Activated CD4-positive, alpha-beta T cell treated with anti-CD3 and anti-CD28 coated beads, Interleukin-2, amount 10 ng/mL, durations not matched to agents 24 days and 14 days (primary cell): ENCODE measurements at regions of chr2 and their contacts with region 1.

Region 1: GRCh38 chr2:216081487-216082116 is at the starts of genes PECR and TMEM169:
- DNase-seq: peak; percentile 93
- H3K4me3 Mint-ChIP-seq: peak within 1 kb of the TSS; percentile 90
- H3K27ac Mint-ChIP-seq: peak within 1 kb of the TSS; percentile 78
- H3K4me1 Mint-ChIP-seq: peaks cover 52% of the 10 kb centered on the region
- H3K27me3 Mint-ChIP-seq: no peaks in the 10 kb centered on the region
- total RNA-seq, gene PECR: 13.1 and 15.3 TPM in 2 replicates
- total RNA-seq, gene TMEM169: 0.51 and 0.97 TPM in 2 replicates

Region 2: GRCh38 chr2:215870986-215871385 is 210.6 kb before region 1 on chr2:
- intact Hi-C with region 1: no loop called
- DNase-seq: no peak
- H3K4me3 Mint-ChIP-seq: no peak overlapping the region
- H3K27ac Mint-ChIP-seq: no peak overlapping the region
- H3K4me1 Mint-ChIP-seq: no peaks in the 10 kb centered on the region
- H3K27me3 Mint-ChIP-seq: peaks cover 6% of the 10 kb centered on the region

Region 3: GRCh38 chr2:216034065-216034464 is 47.5 kb before region 1 on chr2:
- intact Hi-C with region 1: loop called (anchors 1 kb)
- DNase-seq: peak; percentile 94
- H3K4me3 Mint-ChIP-seq: no peak overlapping the region
- H3K27ac Mint-ChIP-seq: no peak overlapping the region
- H3K4me1 Mint-ChIP-seq: peaks cover 36% of the 10 kb centered on the region
- H3K27me3 Mint-ChIP-seq: no peaks in the 10 kb centered on the region

Region 4: GRCh38 chr2:216044883-216045486 is 36.6 kb before region 1 on chr2:
- intact Hi-C with region 1: no loop called
- DNase-seq: no peak
- H3K4me3 Mint-ChIP-seq: no peak overlapping the region
- H3K27ac Mint-ChIP-seq: no peak overlapping the region
- H3K4me1 Mint-ChIP-seq: peaks cover 6% of the 10 kb centered on the region
- H3K27me3 Mint-ChIP-seq: no peaks in the 10 kb centered on the region

Region 5: GRCh38 chr2:216064011-216064630 is 17.5 kb before region 1 on chr2:
- intact Hi-C with region 1: loop called (anchors 1 kb)
- DNase-seq: no peak
- H3K4me3 Mint-ChIP-seq: no peak overlapping the region
- H3K27ac Mint-ChIP-seq: peak overlapping the region; percentile 11
- H3K4me1 Mint-ChIP-seq: peaks cover 8% of the 10 kb centered on the region
- H3K27me3 Mint-ChIP-seq: no peaks in the 10 kb centered on the region

Region 6: DNA sequence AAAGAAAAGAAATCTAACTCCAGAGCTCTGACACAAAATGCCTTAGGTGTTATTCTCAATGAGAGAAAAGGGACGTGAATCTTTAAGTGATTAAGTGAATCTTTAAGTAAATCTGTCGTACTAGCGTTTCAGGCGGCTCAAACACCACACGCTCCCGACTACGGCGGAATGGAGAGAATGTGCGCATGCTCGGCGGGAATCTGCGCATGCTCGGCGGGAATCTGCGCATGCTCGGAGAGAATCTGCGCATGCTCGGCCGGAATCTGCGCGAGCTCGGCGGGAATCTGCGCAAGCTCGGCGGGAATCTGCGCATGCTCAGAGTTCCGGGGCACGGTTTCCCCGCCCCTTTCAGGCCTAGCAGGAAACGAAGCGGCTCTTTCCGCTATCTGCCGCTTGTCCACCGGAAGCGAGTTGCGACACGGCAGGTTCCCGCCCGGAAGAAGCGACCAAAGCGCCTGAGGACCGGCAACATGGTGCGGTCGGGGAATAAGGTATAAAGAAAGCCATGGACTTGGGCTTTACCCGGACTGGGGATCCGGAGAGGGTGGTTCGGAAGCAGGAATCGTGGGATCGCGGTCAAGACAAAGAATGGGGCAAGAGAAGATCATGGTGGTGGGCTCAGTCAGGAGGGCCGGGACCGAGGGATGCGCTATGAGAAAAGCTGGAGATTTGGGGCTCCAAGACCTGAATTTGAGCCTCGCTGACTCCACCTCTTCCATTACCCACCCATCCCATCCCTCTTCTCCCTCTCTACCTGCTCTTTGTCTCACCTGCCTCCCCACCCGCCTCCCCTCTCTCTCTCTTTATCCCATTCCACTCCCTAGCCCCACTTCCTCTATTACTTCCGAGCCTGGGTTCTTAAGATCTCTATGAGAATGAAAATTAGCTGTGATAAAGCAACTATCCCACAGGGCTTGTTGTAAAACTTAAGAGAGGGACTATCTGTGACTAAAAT is 27.6 kb after region 1 on chr2 and contains the start of gene XRCC5:
- intact Hi-C with region 1: loop called (anchors 1 kb)
- DNase-seq: peak; percentile 99
- H3K4me3 Mint-ChIP-seq: peak within 1 kb of the TSS; percentile 100
- H3K27ac Mint-ChIP-seq: peak within 1 kb of the TSS; percentile 98
- H3K4me1 Mint-ChIP-seq: peaks cover 47% of the 10 kb centered on the region
- H3K27me3 Mint-ChIP-seq: peaks cover 4% of the 10 kb centered on the region
- total RNA-seq, gene XRCC5: 476 and 510 TPM in 2 replicates